Calu3 (cell line): ENCODE measurements at regions of chr3 and their contacts with region 1.

Region 1: GRCh38 chr3:62475306-62475705 is 102.0 kb upstream of the FEZF2 start:
- DNase-seq: no peak
- H3K4me3 Mint-ChIP-seq: no peak overlapping the region
- H3K27ac Mint-ChIP-seq: no peak overlapping the region
- H3K4me1 Mint-ChIP-seq: no peaks in the 10 kb centered on the region
- H3K27me3 Mint-ChIP-seq: no peaks in the 10 kb centered on the region
- CTCF ChIP-seq: no peak

Region 2: GRCh38 chr3:62502315-62503300 is 27.3 kb after region 1 on chr3:
- CTCF ChIA-PET with region 1: interaction called, 12 read pairs
- intact Hi-C with region 1: no loop called
- DNase-seq: no peak
- H3K4me3 Mint-ChIP-seq: no peak overlapping the region
- H3K27ac Mint-ChIP-seq: no peak overlapping the region
- H3K4me1 Mint-ChIP-seq: no peaks in the 10 kb centered on the region
- H3K27me3 Mint-ChIP-seq: no peaks in the 10 kb centered on the region
- CTCF ChIP-seq: no peak

Region 3: GRCh38 chr3:62638316-62638715 is 163.0 kb after region 1 on chr3:
- CTCF ChIA-PET with region 1: no interaction called
- intact Hi-C with region 1: no loop called
- DNase-seq: no peak
- H3K4me3 Mint-ChIP-seq: no peak overlapping the region
- H3K27ac Mint-ChIP-seq: no peak overlapping the region
- H3K4me1 Mint-ChIP-seq: no peaks in the 10 kb centered on the region
- H3K27me3 Mint-ChIP-seq: peaks cover 76% of the 10 kb centered on the region
- CTCF ChIP-seq: no peak